H1 (cell line): ENCODE measurements at regions of chr11 and their contacts with region 1.

Region 1: GRCh38 chr11:84398017-84398626 is 1112.0 kb upstream of the CCDC90B start:
- DNase-seq: no peak
- H3K4me3 ChIP-seq: no peak overlapping the region
- H3K27ac ChIP-seq: no peak overlapping the region
- H3K4me1 ChIP-seq: no peaks in the 10 kb centered on the region
- H3K27me3 ChIP-seq: peaks cover 0 to 3% (median 0%) of the 10 kb centered on the region in 4 experiments; a peak in 1 of 7 replicates
- CTCF ChIP-seq: peak in 2 of 3 experiments; percentile 57 to 61; a peak in 3 of 4 replicates
- EP300 ChIP-seq: no peak
- POLR2A ChIP-seq: no peak
- RAD21 ChIP-seq: peak; percentile 76 to 80

Region 2: GRCh38 chr11:84413549-84413948 is 15.4 kb after region 1 on chr11:
- CTCF ChIA-PET with region 1: interaction called, 24 read pairs
- POLR2A ChIA-PET with region 1: no interaction called
- DNase-seq: no peak
- H3K4me3 ChIP-seq: no peak overlapping the region
- H3K27ac ChIP-seq: no peak overlapping the region
- H3K4me1 ChIP-seq: peaks cover 0 to 8% (median 5%) of the 10 kb centered on the region in 4 experiments; a peak in 4 of 7 replicates
- H3K27me3 ChIP-seq: peaks cover 0 to 1% (median 0%) of the 10 kb centered on the region in 4 experiments; a peak in 1 of 7 replicates
- CTCF ChIP-seq: no peak
- EP300 ChIP-seq: no peak
- POLR2A ChIP-seq: no peak
- RAD21 ChIP-seq: no peak

Region 3: DNA sequence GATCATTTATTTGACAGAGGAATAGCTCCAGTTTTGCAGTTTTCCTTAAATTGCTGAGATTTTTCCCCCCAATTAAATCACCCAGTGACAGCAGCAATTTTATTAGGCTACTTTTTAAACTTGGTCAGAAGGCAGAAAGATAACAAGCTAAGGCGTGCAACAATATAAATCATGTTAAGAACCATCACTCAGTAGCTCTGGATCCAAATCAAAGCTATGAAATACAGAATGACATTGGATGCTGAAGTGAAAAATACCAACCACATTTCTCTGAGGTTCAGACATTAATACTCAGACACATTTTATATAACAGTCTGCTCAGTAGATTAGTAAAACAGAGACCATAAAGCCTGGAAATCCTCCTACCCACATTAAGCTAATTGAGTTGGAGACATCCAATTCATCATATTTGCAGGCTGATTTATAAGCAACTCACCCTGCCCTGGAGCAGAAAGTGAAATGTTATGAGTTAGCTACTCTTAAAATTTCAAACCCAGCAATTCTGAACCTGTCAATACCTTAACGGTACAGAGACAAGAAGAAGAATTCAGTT is 120.6 kb after region 1 on chr11:
- CTCF ChIA-PET with region 1: interaction called, 112 read pairs
- POLR2A ChIA-PET with region 1: no interaction called
- DNase-seq: no peak
- H3K4me3 ChIP-seq: no peak overlapping the region
- H3K27ac ChIP-seq: no peak overlapping the region
- H3K4me1 ChIP-seq: no peaks in the 10 kb centered on the region
- H3K27me3 ChIP-seq: peaks cover 0 to 1% (median 0%) of the 10 kb centered on the region in 4 experiments; a peak in 1 of 7 replicates
- CTCF ChIP-seq: no peak
- EP300 ChIP-seq: no peak
- POLR2A ChIP-seq: no peak
- RAD21 ChIP-seq: no peak

Region 4: DNA sequence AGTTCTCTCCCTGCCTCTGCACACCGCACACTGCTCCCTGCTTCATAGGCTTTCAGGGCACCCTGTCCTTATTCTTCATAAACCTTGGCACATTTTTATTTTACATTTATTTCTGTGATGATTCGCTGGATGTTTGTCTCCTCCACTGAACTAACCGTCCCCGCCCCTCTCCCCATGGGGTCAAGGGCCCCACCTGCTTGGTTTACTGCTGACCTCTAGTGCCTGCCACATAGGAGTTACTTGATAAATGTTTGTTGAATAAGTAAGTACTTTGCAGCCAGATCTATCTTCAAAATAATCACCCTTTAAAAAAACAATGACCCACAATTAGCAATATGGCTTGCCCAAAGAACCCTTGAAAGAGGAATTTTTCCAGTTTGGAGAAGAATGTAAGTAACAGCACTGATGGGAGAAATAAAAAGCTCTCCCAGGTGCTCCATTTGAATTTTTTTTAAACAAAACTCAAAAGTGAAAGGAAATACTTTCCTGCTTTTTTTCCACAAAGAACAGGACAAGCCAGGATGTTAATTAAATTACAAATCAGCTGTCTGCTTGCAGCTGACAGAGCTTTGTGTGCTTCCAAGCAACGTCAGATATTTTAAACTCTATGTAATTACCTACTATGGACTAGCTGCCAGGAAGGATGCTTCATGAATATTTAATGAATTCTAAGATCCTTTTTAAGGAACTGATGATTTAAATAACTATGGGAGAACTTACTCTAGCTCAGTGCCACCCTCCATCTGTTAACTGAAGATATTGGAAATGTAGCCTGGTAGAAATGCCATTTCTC is 145.4 kb after region 1 on chr11:
- CTCF ChIA-PET with region 1: interaction called, 16 read pairs
- POLR2A ChIA-PET with region 1: no interaction called
- DNase-seq: peak; percentile 43 to 88
- H3K4me3 ChIP-seq: peak overlapping the region in 2 of 4 experiments; percentile 16 to 43; a peak in 4 of 8 replicates
- H3K27ac ChIP-seq: peak overlapping the region; percentile 27
- H3K4me1 ChIP-seq: peaks cover 0 to 14% (median 8%) of the 10 kb centered on the region in 4 experiments; a peak in 4 of 7 replicates
- H3K27me3 ChIP-seq: no peaks in the 10 kb centered on the region
- CTCF ChIP-seq: peak; percentile 27 to 59 (median 47)
- EP300 ChIP-seq: no peak; a peak in 1 of 3 replicates
- POLR2A ChIP-seq: no peak
- RAD21 ChIP-seq: peak; percentile 72 to 81